ENCODE measurements at regions of chr9 and their contacts with region 1.

Region 1: GRCh38 chr9:87656485-87656884 is 69.4 kb upstream of the CTSL start:
- DNase-seq: no peak

Region 2: DNA sequence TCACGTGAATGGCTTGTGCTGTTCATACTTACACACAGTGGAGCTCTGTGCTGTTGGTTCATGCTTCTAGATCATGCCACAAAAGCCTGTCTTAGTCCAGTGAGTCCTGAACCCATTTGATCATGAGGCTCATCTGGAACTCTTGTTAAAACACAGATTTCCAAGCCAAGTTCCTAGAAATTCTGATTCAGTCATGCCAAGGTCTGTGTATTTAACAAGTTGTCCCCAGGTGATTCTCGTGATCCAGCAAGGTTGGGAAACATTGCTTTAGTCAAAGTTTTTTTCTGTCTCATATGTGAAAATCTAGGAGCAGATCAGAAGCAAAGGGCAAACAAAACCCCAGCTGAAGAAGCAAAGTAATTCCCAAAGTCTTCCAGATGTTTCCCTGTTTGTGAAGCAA is 596.7 kb before region 1 on chr9:
- intact Hi-C with region 1: loop called in 1 of 2 experiments (anchors 10 kb)
- DNase-seq: no peak

Region 3: DNA sequence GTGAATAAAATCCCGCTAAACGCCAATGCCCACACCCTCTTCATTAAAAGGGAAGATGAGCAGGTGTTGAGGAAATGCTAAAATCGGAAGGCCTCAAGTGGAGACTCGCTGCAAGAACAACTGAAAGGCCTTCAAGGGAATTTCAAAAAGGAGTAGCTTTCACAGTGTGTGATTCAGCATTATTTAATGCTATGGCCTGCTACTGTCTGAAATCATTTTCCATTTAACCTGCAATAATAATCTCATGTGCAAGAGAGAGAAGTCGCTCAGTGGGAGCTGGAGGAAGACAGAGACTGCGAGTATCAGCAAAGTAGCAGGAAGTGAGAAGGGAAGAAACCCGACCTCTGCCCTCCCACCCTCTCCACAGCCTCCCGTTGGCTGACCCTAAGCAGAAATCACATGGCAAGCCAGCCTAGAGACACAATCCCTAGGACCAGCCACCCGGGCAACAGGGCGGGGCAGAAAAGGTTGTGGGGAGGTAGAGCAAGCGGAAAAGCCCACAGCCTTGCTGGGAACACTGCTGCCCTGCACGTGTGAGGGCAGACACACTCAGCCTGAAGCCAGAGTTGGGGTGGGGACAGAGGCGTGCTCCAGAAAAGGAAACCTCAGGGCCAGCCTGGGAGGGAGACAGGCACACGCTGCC is 29.5 kb after region 1 on chr9:
- intact Hi-C with region 1: no loop called
- DNase-seq: no peak

Region 4: DNA sequence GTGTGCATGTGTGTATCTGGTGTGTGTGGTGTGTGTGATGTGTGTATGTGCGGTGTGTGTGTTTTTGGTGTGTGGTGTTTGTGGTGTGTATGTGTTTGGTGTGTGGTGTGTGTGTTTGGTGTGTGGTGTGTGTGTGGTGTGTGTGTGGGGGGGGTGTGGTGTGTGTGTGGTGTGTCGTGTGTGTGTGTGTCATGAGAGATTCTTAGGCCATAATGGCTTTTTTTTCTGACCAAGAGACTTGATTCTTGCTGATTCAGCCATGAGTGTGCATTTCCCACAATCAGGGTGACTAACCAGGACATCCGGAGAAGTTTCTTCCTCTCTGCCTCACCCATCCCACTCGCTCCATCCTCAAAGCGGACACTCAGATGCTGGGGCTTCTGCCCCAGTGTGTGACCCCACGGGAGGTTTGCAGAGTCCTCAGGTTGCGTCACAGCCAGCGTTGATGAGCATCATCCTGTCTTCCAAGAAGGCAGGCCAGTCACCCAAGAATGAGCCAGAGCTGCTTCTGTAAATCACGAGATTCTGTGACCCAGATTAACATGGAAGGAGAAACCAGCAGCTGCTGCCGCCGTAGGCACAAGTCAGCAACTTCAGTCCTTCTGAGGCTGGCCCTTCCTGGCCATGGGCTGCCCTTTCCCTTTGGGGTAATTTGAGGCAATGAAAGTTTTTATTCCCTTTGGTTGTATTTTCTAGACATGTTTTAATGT is 56.9 kb after region 1 on chr9:
- intact Hi-C with region 1: no loop called
- DNase-seq: peak; percentile 98

Measured in posterior vena cava (tissue), 2 donors.